Transverse colon (tissue), 4 donors: ENCODE measurements at regions of chr12 and their contacts with region 1.

Region 1: GRCh38 chr12:93990832-93991803 is 157.3 kb upstream of the PLXNC1 start:
- DNase-seq: no peak
- H3K4me3 ChIP-seq: no peak overlapping the region
- H3K27ac ChIP-seq: no peak overlapping the region
- H3K4me1 ChIP-seq: no peaks in the 10 kb centered on the region
- H3K27me3 ChIP-seq: no peaks in the 10 kb centered on the region
- CTCF ChIP-seq: peak in 3 of 5 experiments; percentile 10 to 17 (median 16)
- EP300 ChIP-seq: no peak
- POLR2A ChIP-seq: no peak

Region 2: DNA sequence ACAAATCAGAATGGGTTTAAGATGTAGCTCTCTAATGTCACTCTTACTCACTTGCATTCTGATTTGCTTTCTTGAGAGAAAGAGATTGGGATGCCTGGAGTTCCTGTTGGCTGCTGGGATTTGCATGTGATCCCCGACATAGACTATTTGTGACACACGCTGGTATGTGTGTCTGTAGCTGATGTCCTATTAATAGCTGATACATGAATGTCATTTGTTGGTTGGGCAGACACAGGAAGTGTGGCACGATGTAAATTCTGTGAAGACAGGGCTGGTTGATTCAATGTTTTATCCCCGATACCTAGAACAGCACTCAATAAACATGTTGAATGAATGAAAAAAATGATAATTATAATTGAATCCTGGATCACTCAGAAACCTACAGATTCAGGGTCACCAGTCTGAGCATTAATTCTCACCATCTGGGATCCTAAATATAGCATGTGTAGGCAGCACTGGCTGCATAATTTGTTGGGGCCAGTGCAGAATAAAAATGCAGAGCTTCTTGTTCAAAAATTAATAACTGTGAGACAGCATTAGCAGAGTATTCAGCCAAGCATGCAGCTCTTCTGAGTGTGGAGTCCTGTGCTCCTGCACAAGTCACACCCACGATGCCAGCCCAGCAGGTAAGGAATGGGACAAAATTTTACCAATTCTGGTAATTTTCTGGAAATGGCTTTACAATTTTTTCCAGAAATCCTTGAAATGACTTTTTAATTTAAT is 454.2 kb before region 1 on chr12:
- in situ Hi-C with region 1: loop called in 1 of 4 experiments (anchors 25 kb)
- intact Hi-C with region 1: no loop called
- DNase-seq: no peak
- H3K4me3 ChIP-seq: no peak overlapping the region
- H3K27ac ChIP-seq: no peak overlapping the region
- H3K4me1 ChIP-seq: no peaks in the 10 kb centered on the region
- H3K27me3 ChIP-seq: no peaks in the 10 kb centered on the region
- CTCF ChIP-seq: no peak
- EP300 ChIP-seq: no peak
- POLR2A ChIP-seq: no peak

Region 3: DNA sequence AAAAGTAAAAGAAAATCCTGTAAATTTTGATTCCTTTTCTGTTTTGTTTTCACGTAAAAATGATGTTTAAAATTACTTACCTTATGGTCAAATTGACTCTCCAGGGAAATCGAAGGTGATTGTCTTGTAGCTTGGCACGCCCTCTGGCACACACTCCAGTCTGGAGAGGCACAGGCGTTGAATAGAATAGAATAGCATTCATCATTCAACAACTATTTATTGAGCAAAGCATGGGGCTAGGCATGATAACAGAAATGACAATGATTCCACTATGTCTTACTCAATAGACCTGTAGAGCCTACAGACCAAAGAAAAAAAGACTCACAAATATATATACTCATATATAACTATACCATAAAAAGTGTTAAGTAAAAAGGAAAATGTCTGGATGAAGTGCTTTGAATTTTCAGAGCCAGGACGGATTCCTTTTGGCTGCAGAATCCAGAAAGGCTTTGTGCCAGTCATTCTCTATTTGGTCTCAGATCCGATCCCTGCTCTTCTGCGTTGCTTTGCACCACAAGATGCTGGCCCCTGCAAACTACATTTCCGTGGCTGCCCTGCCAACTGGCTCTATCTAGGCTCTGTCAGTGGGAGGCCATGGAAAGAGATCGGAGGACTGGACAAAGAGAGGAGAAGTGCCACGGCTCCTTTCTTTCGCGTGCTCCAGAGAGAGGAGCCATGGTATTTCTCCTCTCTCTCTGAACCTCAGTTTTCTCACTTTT is 82.1 kb before region 1 on chr12:
- in situ Hi-C with region 1: no loop called
- intact Hi-C with region 1: no loop called
- DNase-seq: peak; percentile 51
- H3K4me3 ChIP-seq: no peak overlapping the region
- H3K27ac ChIP-seq: no peak overlapping the region
- H3K4me1 ChIP-seq: no peaks in the 10 kb centered on the region
- H3K27me3 ChIP-seq: no peaks in the 10 kb centered on the region
- CTCF ChIP-seq: no peak
- EP300 ChIP-seq: no peak
- POLR2A ChIP-seq: no peak

Region 4: GRCh38 chr12:94039914-94040313 is 48.8 kb after region 1 on chr12:
- in situ Hi-C with region 1: no loop called
- intact Hi-C with region 1: no loop called
- DNase-seq: no peak
- H3K4me3 ChIP-seq: no peak overlapping the region
- H3K27ac ChIP-seq: no peak overlapping the region
- H3K4me1 ChIP-seq: no peaks in the 10 kb centered on the region
- H3K27me3 ChIP-seq: no peaks in the 10 kb centered on the region
- CTCF ChIP-seq: no peak
- EP300 ChIP-seq: no peak
- POLR2A ChIP-seq: no peak